ENCODE measurements at regions of chr2 and their contacts with region 1.

Region 1: GRCh38 chr2:190718652-190719526 is 70.0 kb downstream of the NAB1 start:
- DNase-seq: peak; percentile 68
- ATAC-seq: peak; percentile 81
- H3K4me3 ChIP-seq: no peak overlapping the region
- H3K27ac ChIP-seq: peak overlapping the region; percentile 57
- H3K4me1 ChIP-seq: peaks cover 41% of the 10 kb centered on the region
- H3K27me3 ChIP-seq: no peaks in the 10 kb centered on the region
- CTCF ChIP-seq: peak in 1 of 3 experiments; percentile 19; a peak in 1 of 6 replicates
- EP300 ChIP-seq: peak; percentile 71 to 75; a peak in 3 of 4 replicates
- POLR2A ChIP-seq: 0 out of 2 replicates have a peak, but pooled peaks have one; percentile 38
- RAD21 ChIP-seq: peak; percentile 32; the same call in 1 of the 2 replicates

Region 2: GRCh38 chr2:190655113-190655512 is 63.8 kb before region 1 on chr2:
- CTCF ChIA-PET with region 1: interaction called, 4 read pairs
- POLR2A ChIA-PET with region 1: interaction called, 3 read pairs
- RAD21 ChIA-PET with region 1: interaction called, 11 read pairs
- SMC1A ChIA-PET with region 1: interaction called, 13 read pairs
- in situ Hi-C with region 1: no loop called
- intact Hi-C with region 1: no loop called
- DNase-seq: no peak
- ATAC-seq: no peak
- H3K4me3 ChIP-seq: no peak overlapping the region
- H3K27ac ChIP-seq: no peak overlapping the region
- H3K4me1 ChIP-seq: no peaks in the 10 kb centered on the region
- H3K27me3 ChIP-seq: no peaks in the 10 kb centered on the region
- CTCF ChIP-seq: no peak
- EP300 ChIP-seq: no peak
- POLR2A ChIP-seq: no peak
- RAD21 ChIP-seq: no peak

Region 3: DNA sequence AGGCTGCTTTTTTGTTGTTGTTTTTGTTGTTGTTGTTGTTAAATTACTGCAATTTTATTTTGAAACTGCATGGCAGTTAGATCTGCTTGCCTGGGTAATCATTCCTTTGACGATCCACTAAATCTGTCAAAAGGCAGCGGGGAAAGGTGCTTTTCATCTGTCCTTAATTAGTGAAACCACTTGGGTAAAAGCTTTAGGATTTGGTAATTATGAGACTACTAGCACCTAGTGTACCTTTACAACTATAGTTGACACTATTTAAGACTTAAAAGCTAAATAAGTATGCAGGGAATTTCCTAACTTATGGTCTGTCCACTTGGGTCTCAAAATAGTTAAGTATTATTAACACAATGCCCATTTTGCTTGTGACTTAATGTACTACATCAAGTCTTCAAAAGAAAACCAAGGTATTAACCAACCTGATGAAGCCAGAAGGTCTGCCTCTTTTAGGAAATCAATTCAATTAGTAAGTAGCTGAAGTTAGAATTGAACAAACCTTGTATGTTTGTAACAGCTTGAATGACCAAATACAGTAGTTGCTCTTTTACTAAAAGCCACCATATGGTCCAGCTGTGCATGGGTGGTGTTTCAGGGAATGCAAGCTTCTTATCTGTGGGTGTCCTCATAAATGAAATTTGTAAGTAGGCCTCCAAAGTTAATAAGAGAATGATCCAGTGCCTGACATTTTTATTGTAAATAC is 25.2 kb before region 1 on chr2:
- CTCF ChIA-PET with region 1: interaction called, 16 read pairs
- POLR2A ChIA-PET with region 1: interaction called, 24 read pairs
- RAD21 ChIA-PET with region 1: interaction called, 62 read pairs
- SMC1A ChIA-PET with region 1: interaction called, 137 read pairs
- in situ Hi-C with region 1: no loop called
- intact Hi-C with region 1: loop called (anchors 1 kb)
- DNase-seq: no peak
- ATAC-seq: peak; percentile 71
- H3K4me3 ChIP-seq: no peak overlapping the region
- H3K27ac ChIP-seq: peak overlapping the region; percentile 46
- H3K4me1 ChIP-seq: peaks cover 18% of the 10 kb centered on the region
- H3K27me3 ChIP-seq: no peaks in the 10 kb centered on the region
- CTCF ChIP-seq: no peak
- EP300 ChIP-seq: peak; percentile 13 to 58; a peak in 3 of 4 replicates
- POLR2A ChIP-seq: no peak
- RAD21 ChIP-seq: no peak

Region 4: DNA sequence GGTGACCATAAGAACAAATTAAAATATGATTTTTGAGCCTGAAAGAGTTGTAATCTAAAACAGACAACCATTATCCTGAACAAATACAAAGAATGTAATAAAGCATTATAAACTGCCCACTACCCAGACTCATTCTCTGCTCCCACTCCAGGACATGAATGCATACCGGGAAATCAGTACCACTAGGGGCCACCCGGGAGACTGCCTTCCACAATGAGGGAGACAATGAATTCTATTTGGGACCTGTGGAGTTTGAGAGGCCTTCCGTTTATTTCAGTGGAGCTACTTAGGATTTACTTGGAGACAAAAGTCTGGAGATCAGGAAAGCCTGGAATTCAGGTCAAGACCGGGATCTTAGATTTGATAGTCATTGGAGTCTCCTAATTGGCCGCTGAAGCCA is 20.0 kb before region 1 on chr2:
- CTCF ChIA-PET with region 1: interaction called, 16 read pairs
- POLR2A ChIA-PET with region 1: interaction called, 53 read pairs
- RAD21 ChIA-PET with region 1: interaction called, 96 read pairs
- SMC1A ChIA-PET with region 1: interaction called, 137 read pairs
- in situ Hi-C with region 1: no loop called
- intact Hi-C with region 1: loop called (anchors 1 kb)
- DNase-seq: no peak
- ATAC-seq: no peak
- H3K4me3 ChIP-seq: no peak overlapping the region
- H3K27ac ChIP-seq: no peak overlapping the region
- H3K4me1 ChIP-seq: peaks cover 25% of the 10 kb centered on the region
- H3K27me3 ChIP-seq: no peaks in the 10 kb centered on the region
- CTCF ChIP-seq: no peak
- EP300 ChIP-seq: no peak
- POLR2A ChIP-seq: no peak
- RAD21 ChIP-seq: no peak

Region 5: DNA sequence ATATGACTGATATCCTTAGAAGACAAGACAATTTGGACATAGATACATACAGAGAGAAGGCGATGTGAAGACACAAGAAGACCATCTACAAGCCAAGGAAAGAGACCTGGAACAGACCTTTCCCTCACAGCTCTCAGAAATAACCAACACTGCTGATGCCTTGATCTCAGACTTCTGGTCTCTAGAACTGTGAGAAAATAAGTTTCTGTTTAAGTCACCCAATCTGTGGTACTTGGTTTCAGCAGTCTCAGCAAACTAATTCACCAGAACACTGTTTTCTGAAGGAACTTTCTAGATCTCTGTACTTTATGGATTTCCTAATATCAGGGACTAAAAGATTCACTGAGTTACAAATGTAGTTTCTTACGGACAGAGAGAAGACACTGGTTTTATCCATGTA is 11.2 kb before region 1 on chr2:
- CTCF ChIA-PET with region 1: interaction called, 13 read pairs
- POLR2A ChIA-PET with region 1: interaction called, 53 read pairs
- RAD21 ChIA-PET with region 1: interaction called, 96 read pairs
- SMC1A ChIA-PET with region 1: interaction called, 121 read pairs
- in situ Hi-C with region 1: no loop called
- intact Hi-C with region 1: no loop called
- DNase-seq: no peak
- ATAC-seq: peak; percentile 66
- H3K4me3 ChIP-seq: no peak overlapping the region
- H3K27ac ChIP-seq: no peak overlapping the region
- H3K4me1 ChIP-seq: peaks cover 30% of the 10 kb centered on the region
- H3K27me3 ChIP-seq: no peaks in the 10 kb centered on the region
- CTCF ChIP-seq: no peak
- EP300 ChIP-seq: no peak
- POLR2A ChIP-seq: no peak
- RAD21 ChIP-seq: no peak

Region 6: GRCh38 chr2:190880378-190881073 is 161.6 kb after region 1 on chr2 and contains the start of gene GLS:
- CTCF ChIA-PET with region 1: no interaction called
- POLR2A ChIA-PET with region 1: no interaction called
- RAD21 ChIA-PET with region 1: no interaction called
- SMC1A ChIA-PET with region 1: interaction called, 3 read pairs
- in situ Hi-C with region 1: no loop called
- intact Hi-C with region 1: loop called (anchors 5 kb)
- DNase-seq: peak; percentile 86
- ATAC-seq: peak; percentile 83
- H3K4me3 ChIP-seq: peak within 1 kb of the TSS; percentile 94
- H3K27ac ChIP-seq: peak within 1 kb of the TSS; percentile 95
- H3K4me1 ChIP-seq: peaks cover 6% of the 10 kb centered on the region; the same call in 1 of the 2 replicates
- H3K27me3 ChIP-seq: no peaks in the 10 kb centered on the region
- CTCF ChIP-seq: no peak
- EP300 ChIP-seq: 0 out of 4 replicates have a peak, but pooled peaks of 1 of the 2 experiments have one; percentile 20
- POLR2A ChIP-seq: peak; percentile 99
- RAD21 ChIP-seq: no peak
- polyA plus RNA-seq, gene GLS: 23.7 to 30.5 TPM

Region 7: GRCh38 chr2:191128172-191128910 is 409.5 kb after region 1 on chr2:
- CTCF ChIA-PET with region 1: no interaction called
- POLR2A ChIA-PET with region 1: no interaction called
- RAD21 ChIA-PET with region 1: no interaction called
- SMC1A ChIA-PET with region 1: no interaction called
- in situ Hi-C with region 1: no loop called
- intact Hi-C with region 1: loop called (anchors 10 kb)
- DNase-seq: no peak
- ATAC-seq: peak; percentile 94
- H3K4me3 ChIP-seq: no peak overlapping the region
- H3K27ac ChIP-seq: no peak overlapping the region
- H3K4me1 ChIP-seq: no peaks in the 10 kb centered on the region
- H3K27me3 ChIP-seq: no peaks in the 10 kb centered on the region
- CTCF ChIP-seq: no peak
- EP300 ChIP-seq: no peak
- POLR2A ChIP-seq: no peak
- RAD21 ChIP-seq: no peak